CD14-positive monocyte (primary cell): ENCODE measurements at regions of chr22 and their contacts with region 1.

Region 1: GRCh38 chr22:20916983-20917810 is at the start of gene CRKL:
- DNase-seq: peak; percentile 97 to 98 (median 98)
- H3K4me3 ChIP-seq: peak within 1 kb of the TSS; percentile 82 to 89 (median 89)
- H3K4me3 Mint-ChIP-seq: peak within 1 kb of the TSS; percentile 99
- H3K27ac ChIP-seq: peak within 1 kb of the TSS; percentile 78 to 91
- H3K27ac Mint-ChIP-seq: peak within 1 kb of the TSS; percentile 91 to 96 (median 93)
- H3K4me1 ChIP-seq: peaks cover 27 to 32% of the 10 kb centered on the region in 2 donors
- H3K4me1 Mint-ChIP-seq: peaks cover 42% of the 10 kb centered on the region
- H3K27me3 ChIP-seq: no peaks in the 10 kb centered on the region
- H3K27me3 Mint-ChIP-seq: peaks cover 0 to 4% (median 1%) of the 10 kb centered on the region in 3 donors
- CTCF ChIP-seq: peak; percentile 86
- polyA plus RNA-seq, gene CRKL: 26.0 to 37.5 (median 29.4) TPM

Region 2: DNA sequence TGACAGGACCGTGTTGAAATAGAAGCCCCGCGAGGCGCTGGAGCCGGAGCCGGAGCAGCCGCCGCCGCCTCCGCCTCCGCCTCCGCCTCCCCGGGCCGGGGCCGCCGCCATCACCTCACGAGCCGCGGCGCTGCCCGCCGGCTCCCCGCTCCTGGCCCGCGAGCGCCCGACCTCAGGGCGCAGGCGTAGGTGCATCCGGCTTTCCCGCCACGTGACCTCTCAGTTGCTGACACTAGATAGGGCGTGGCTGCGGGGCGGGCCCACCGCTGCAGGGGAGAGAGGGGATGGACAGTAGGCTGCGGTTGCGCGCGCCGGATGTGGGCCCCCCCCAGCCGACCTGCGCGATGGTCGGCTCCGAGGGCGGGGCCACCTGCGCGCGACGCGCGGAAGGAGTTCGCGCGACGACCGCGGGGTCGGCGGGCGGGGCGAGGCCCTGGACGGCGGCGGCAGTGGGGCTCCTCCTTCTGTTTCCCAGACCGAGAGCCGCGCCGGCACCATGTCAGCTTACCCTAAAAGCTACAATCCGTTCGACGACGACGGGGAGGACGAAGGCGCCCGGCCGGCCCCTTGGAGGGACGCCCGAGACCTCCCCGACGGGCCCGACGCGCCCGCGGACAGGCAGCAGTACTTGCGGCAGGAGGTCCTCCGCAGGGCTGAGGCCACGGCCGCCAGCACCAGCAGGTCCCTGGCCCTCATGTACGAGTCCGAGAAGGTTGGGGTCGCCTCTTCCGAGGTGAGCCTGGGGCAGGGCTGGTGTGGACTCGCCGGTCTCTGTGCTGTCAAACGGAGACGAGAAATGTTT is 58.4 kb before region 1 on chr22 and contains the starts of genes PI4KA and SNAP29:
- intact Hi-C with region 1: loop called (anchors 5 to 10 kb)
- DNase-seq: peak; percentile 97 to 99 (median 98)
- H3K4me3 ChIP-seq: peak within 1 kb of the TSS; percentile 74 to 92 (median 74)
- H3K4me3 Mint-ChIP-seq: peak within 1 kb of the TSS; percentile 93 to 95
- H3K27ac ChIP-seq: peak within 1 kb of the TSS; percentile 64 to 91
- H3K27ac Mint-ChIP-seq: peak within 1 kb of the TSS; percentile 88 to 95 (median 91)
- H3K4me1 ChIP-seq: peaks cover 52 to 62% of the 10 kb centered on the region in 2 donors
- H3K4me1 Mint-ChIP-seq: peaks cover 61% of the 10 kb centered on the region
- H3K27me3 ChIP-seq: no peaks in the 10 kb centered on the region
- H3K27me3 Mint-ChIP-seq: peaks cover 0 to 2% (median 1%) of the 10 kb centered on the region in 3 donors
- CTCF ChIP-seq: no peak
- polyA plus RNA-seq, gene PI4KA: 22.8 to 74.4 (median 38.2) TPM
- polyA plus RNA-seq, gene SNAP29: 22.3 to 32.8 (median 28.9) TPM

Region 3: GRCh38 chr22:20867179-20868024 is 49.8 kb before region 1 on chr22:
- intact Hi-C with region 1: loop called in 1 of 2 experiments (anchors 10 kb)
- DNase-seq: peak; percentile 77 to 81 (median 81)
- H3K4me3 ChIP-seq: peak overlapping the region in 2 of 3 experiments; percentile 2 to 53
- H3K4me3 Mint-ChIP-seq: peak overlapping the region; percentile 12 to 57
- H3K27ac ChIP-seq: peak overlapping the region; percentile 92
- H3K27ac Mint-ChIP-seq: peak overlapping the region; percentile 92 to 96 (median 93)
- H3K4me1 ChIP-seq: peaks cover 47 to 50% of the 10 kb centered on the region in 2 donors
- H3K4me1 Mint-ChIP-seq: peaks cover 49% of the 10 kb centered on the region
- H3K27me3 ChIP-seq: no peaks in the 10 kb centered on the region
- H3K27me3 Mint-ChIP-seq: no peaks in the 10 kb centered on the region
- CTCF ChIP-seq: no peak

Region 4: DNA sequence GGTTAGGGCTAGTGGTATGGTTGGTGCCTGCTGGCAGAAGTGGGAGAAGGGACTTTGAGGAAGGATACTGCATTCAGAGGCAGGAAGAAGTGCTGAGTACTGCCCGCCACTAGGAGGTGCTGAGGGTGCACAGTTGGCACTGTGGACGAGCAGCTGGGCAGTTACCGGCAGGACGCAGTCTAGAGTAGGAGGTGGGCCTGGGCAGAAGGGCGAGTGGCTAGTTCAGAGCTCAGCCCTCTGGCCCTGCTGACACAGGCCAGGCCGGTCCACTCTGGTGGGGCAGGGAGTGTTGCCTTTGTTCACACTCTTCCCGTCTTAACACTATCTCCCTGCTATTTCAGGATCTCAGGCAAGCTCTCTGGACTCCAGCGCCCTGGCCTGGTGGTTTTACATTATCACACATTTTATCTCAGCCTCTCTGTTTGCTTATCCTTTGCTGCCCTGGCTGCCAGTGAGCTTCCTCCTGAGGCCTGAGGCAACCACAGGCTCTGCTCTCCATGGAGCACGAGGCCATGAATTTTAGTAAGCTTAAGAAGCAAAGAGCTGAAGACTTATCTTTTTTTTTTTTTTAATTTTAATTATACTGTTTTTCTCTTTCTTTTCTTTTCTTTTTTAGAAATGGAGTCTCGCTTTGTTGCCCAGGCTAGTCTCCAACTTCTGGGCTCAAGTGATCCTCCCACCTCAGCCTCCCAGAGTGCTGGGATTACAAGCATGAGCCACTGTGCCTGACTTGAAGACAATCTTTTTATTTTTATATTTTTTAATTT is 31.5 kb before region 1 on chr22:
- intact Hi-C with region 1: loop called (anchors 2 to 5 kb)
- DNase-seq: peak; percentile 76 to 84 (median 84)
- H3K4me3 ChIP-seq: no peak overlapping the region
- H3K4me3 Mint-ChIP-seq: peak overlapping the region; percentile 14 to 41
- H3K27ac ChIP-seq: peak overlapping the region; percentile 23 to 54
- H3K27ac Mint-ChIP-seq: peak overlapping the region; percentile 53 to 93 (median 78)
- H3K4me1 ChIP-seq: peaks cover 3 to 4% of the 10 kb centered on the region in 2 donors
- H3K4me1 Mint-ChIP-seq: peaks cover 8% of the 10 kb centered on the region
- H3K27me3 ChIP-seq: no peaks in the 10 kb centered on the region
- H3K27me3 Mint-ChIP-seq: peaks cover 0 to 3% (median 0%) of the 10 kb centered on the region in 3 donors
- CTCF ChIP-seq: peak; percentile 98

Region 5: DNA sequence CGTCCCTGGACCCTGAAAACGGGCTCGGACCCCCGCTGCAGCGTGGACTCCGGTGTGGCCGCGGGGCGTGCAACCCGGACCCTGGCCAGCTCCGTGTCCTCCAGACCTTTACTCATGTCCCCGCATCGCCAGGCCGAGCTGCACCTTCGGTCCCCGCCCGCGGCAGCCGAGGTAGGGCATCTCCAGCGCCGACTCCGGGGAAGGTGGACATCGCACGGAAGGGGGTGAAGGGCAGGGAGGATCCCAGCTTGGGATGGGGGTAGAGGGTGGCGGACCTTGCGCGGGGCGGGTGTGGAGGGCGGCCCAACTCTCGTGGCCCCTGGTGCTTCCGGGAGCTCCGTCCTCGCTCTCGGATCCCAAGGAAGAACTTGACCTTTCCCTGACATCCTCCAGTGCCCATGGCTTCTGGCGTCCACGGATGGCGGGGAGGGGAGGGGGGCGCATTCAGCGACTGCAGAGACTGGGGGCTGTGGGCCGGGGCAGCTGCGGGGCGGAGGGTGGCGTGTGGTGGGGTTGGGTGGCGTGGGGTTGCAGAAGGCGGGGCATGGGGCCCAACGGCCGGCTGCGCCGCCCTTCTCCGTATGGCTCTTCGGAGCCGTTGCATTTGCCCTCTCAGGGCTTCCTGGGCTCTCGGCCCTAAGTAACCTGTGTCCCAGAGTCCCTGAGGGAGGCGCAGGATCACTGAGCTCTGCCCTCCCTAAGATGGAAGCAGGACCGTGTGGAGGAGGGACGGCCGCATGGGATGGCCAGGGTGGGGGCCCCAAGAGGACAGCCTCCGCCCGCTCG is 40.3 kb after region 1 on chr22:
- intact Hi-C with region 1: loop called in 1 of 2 experiments (anchors 5 kb)
- DNase-seq: peak; percentile 21 to 32 (median 30)
- H3K4me3 ChIP-seq: peak overlapping the region; percentile 81 to 99 (median 98)
- H3K4me3 Mint-ChIP-seq: peak overlapping the region; percentile 87 to 91
- H3K27ac ChIP-seq: peak overlapping the region; percentile 19 to 87
- H3K27ac Mint-ChIP-seq: peak overlapping the region in 6 of 7 donors; percentile 51 to 85 (median 66)
- H3K4me1 ChIP-seq: peaks cover 27 to 44% of the 10 kb centered on the region in 2 donors
- H3K4me1 Mint-ChIP-seq: peaks cover 39% of the 10 kb centered on the region
- H3K27me3 ChIP-seq: no peaks in the 10 kb centered on the region
- H3K27me3 Mint-ChIP-seq: no peaks in the 10 kb centered on the region
- CTCF ChIP-seq: no peak

Region 6: DNA sequence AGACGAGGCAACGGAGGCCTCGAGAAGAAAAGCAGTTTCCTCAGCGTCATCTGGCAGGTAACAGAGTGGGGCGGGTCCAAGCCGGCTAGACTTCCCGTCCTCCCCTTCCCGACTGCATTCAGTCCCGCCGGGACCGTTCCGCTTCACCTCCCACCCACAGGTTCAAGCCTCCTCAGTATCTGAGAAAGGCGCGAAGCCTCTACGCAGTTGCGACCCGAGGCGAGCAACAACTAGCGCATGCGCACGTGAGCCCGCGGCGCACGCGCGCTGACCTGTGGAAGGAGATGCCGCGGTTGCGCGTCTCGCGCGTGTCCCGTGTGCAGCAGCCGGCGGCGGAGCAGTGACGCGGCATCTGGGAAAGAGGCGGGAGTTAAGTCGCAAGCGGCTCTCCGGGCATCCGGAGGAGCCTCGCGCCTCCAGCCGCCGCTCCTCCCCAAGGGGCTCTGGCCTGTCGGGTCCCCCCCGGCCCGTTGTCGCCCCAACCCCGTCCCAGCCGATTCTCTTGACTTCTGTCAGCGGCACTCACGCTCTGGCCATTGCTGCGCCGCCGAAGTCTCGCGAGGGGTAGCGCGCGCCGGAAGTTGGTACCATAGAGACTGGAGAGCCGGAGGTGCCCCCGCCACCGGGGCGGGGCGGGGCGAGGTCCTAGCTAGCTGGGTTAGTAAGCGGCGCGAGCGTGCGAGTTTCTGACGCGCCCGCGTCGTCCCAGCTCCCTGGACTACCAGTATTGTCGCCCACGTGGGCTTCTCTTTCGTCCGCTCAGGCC is 84.5 kb after region 1 on chr22 and contains the start of gene THAP7:
- intact Hi-C with region 1: loop called in 1 of 2 experiments (anchors 5 kb)
- DNase-seq: peak; percentile 95 to 98 (median 97)
- H3K4me3 ChIP-seq: peak within 1 kb of the TSS; percentile 53 to 79 (median 66)
- H3K4me3 Mint-ChIP-seq: peak within 1 kb of the TSS; percentile 84 to 94
- H3K27ac ChIP-seq: peak within 1 kb of the TSS; percentile 91 to 95
- H3K27ac Mint-ChIP-seq: peak within 1 kb of the TSS; percentile 95 to 99 (median 98)
- H3K4me1 ChIP-seq: peaks cover 24 to 30% of the 10 kb centered on the region in 2 donors
- H3K4me1 Mint-ChIP-seq: peaks cover 26% of the 10 kb centered on the region
- H3K27me3 ChIP-seq: no peaks in the 10 kb centered on the region
- H3K27me3 Mint-ChIP-seq: peaks cover 0 to 5% (median 1%) of the 10 kb centered on the region in 3 donors
- CTCF ChIP-seq: no peak
- polyA plus RNA-seq, gene THAP7: 18.4 to 22.9 (median 19.8) TPM